ENCODE measurements at regions of chr14 and their contacts with region 1.

Region 1: DNA sequence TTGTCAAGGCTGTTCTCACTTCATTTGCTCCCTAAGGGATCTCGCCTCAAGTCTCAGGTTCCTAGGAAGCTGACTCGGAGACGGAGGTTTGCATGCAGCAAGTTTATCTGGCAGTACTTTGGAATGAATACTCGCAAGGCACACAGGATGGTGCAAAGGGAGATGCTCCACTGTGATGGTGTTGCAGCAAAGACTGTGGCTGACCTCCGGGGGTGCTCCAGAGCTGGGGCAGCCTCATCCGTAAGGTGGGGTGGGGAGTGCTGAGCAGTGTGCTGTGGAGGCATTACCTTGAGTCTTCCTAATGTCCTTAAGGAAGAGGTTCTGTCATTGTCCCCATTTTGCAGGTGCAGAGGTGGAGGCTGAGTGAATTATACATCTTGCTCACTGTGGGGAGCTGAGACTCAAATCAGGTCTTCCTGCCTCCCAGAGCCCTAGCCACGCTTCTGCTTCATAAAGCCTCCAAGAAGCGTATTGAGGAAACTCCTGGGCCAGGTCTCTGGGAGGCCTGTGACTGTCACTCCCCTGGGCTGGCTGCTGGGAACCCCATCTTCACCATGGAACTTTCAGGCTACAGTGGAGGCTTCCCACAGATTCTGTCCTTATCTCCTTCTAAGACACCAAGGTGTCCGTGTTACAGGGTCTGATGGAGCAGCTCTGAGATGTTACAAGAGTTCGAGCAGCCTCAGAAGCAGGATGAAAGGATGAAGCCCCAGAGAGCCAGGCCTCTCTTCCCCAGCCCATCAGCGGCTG is 39.5 kb downstream of the GALNT16 start:
- DNase-seq: peak in 1 of 2 experiments; percentile 55
- H3K4me3 ChIP-seq: no peak overlapping the region
- H3K27ac ChIP-seq: no peak overlapping the region
- H3K4me1 ChIP-seq: no peaks in the 10 kb centered on the region
- H3K27me3 ChIP-seq: no peaks in the 10 kb centered on the region
- CTCF ChIP-seq: peak; percentile 65 to 90 (median 86)
- EP300 ChIP-seq: no peak
- POLR2A ChIP-seq: no peak
- RAD21 ChIP-seq: peak; percentile 66 to 72

Region 2: DNA sequence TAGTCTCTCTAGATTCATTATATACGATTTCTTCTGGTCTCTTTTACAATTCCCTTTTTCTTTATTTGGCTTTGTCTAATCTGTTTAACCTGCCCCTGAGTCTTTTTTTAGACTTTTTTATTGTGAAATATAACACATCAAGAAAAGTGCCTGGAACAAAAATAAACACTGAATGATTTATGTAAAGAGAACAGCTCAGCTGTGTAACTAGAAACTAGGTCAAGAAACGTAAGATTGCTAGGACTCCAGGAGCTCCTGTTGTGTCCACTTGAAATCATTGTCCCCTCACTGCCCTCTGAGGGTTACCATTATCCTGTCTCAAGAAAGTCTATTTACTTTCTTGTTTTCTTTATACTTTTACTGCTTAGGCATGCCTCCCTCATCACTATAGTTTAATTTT is 85.1 kb before region 1 on chr14:
- CTCF ChIA-PET with region 1: no interaction called
- POLR2A ChIA-PET with region 1: no interaction called
- DNase-seq: no peak
- H3K4me3 ChIP-seq: no peak overlapping the region
- H3K27ac ChIP-seq: no peak overlapping the region
- H3K4me1 ChIP-seq: no peaks in the 10 kb centered on the region
- H3K27me3 ChIP-seq: no peaks in the 10 kb centered on the region
- CTCF ChIP-seq: no peak
- EP300 ChIP-seq: no peak
- POLR2A ChIP-seq: no peak
- RAD21 ChIP-seq: no peak

Region 3: DNA sequence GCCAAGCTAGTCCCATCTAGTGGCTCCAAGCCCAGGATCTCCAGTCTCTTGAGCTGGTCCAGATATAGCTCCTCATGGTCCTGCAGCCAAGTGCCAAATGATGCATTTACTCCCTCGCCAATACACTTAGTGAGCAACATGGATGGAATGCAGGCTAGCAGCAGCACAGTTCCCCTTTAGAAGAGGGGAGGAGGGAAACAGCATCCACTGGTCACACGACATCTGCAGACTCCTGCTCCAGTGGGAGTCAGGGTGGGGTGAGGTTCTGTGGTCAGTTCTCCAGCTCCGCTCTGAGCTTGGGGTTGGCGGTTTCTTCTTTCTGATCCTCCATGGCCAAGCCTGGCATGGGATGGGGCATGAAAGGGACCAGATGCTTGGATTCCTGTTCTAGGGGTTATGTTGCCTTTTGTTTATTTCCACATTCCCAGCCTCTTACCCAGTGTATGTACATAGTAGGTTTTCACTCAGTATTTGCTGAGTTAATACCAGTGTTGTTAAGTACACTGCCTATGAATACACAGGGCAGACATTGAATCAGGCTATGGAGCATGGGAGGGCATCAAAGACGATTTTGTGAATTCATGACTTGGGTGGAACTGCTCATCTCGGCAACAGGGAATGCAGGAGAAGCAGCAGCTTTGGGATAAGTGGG is 17.8 kb after region 1 on chr14:
- CTCF ChIA-PET with region 1: interaction called, 34 read pairs
- POLR2A ChIA-PET with region 1: interaction called, 3 read pairs
- DNase-seq: peak in 1 of 2 experiments; percentile 31
- H3K4me3 ChIP-seq: no peak overlapping the region
- H3K27ac ChIP-seq: no peak overlapping the region
- H3K4me1 ChIP-seq: no peaks in the 10 kb centered on the region
- H3K27me3 ChIP-seq: no peaks in the 10 kb centered on the region
- CTCF ChIP-seq: no peak
- EP300 ChIP-seq: no peak
- POLR2A ChIP-seq: no peak
- RAD21 ChIP-seq: no peak

Region 4: DNA sequence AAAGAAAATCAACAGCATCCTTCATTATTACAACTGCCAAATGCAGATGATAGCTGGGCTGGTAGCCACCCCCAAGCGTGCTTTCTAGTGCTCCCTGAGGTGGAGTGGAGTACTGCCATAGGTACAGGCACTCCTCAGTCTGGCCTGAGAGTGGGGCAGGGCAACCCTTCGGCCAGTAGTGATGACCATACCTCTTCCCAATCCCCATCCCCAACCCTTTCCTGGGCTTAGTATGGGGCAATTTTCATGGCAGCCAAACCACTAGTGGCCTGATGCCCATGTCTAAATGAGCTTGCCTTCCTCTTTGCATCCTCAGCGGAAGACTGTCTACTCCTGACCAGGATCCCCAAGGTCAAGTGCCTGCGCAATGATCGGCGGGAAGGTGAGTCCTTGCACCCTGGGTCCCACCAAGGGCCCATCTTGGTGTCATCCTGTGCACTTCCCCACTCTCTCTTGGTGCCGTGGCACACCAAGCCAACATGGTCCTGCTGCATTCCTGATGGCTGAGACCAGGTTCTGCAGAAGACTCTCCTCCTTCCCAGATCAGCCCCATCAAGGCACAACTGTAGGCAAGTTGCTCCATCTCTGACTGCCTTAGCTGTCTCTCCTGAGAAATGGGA is 26.3 kb after region 1 on chr14:
- CTCF ChIA-PET with region 1: interaction called, 34 read pairs
- POLR2A ChIA-PET with region 1: no interaction called
- DNase-seq: no peak
- H3K4me3 ChIP-seq: no peak overlapping the region
- H3K27ac ChIP-seq: no peak overlapping the region
- H3K4me1 ChIP-seq: peaks cover 0 to 15% (median 6%) of the 10 kb centered on the region in 4 experiments; a peak in 6 of 7 replicates
- H3K27me3 ChIP-seq: no peaks in the 10 kb centered on the region
- CTCF ChIP-seq: peak; percentile 32 to 50 (median 39)
- EP300 ChIP-seq: no peak
- POLR2A ChIP-seq: no peak
- RAD21 ChIP-seq: peak; percentile 22 to 28; a peak in 1 of 4 replicates

Measured in H1 (cell line).